ENCODE measurements at regions of chr13 and their contacts with region 1.

Region 1: DNA sequence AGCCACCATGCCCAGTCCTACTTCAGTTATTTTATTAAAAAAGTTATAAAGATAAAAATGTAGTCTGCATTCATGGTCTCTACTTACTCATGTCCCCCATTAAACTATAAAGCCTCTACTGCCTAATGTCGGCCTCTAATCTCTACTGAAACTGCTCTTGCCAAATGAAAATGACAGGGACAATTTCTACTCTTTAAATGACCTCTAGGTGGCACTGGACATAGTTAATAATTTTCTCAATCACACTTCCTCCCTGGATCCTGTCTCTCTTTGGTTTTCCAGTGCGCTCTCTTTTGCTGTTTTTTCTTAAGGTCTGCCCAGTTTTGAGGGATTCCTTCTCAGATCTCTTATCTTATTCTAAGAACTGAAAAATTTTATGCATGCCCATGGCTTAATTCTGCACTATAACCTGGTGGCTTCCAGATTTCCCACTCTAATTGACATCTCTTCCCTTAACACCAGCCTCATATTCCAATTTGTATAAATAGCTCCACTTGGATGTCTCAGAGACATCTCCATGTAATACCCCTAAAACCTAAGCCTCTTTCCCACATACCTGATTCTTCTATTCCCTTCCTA is 54.3 kb downstream of the MTMR6 start:
- DNase-seq: peak in 2 of 9 experiments; percentile 29 to 41
- ATAC-seq: no peak
- H3K4me3 ChIP-seq: no peak overlapping the region
- H3K4me3 Mint-ChIP-seq: no peak overlapping the region
- H3K27ac ChIP-seq: no peak overlapping the region
- H3K27ac Mint-ChIP-seq: no peak overlapping the region
- H3K4me1 ChIP-seq: no peaks in the 10 kb centered on the region
- H3K4me1 Mint-ChIP-seq: peaks cover 3% of the 10 kb centered on the region
- H3K27me3 ChIP-seq: no peaks in the 10 kb centered on the region
- H3K27me3 Mint-ChIP-seq: peaks cover 14% of the 10 kb centered on the region
- CTCF ChIP-seq: peak; percentile 49

Region 2: DNA sequence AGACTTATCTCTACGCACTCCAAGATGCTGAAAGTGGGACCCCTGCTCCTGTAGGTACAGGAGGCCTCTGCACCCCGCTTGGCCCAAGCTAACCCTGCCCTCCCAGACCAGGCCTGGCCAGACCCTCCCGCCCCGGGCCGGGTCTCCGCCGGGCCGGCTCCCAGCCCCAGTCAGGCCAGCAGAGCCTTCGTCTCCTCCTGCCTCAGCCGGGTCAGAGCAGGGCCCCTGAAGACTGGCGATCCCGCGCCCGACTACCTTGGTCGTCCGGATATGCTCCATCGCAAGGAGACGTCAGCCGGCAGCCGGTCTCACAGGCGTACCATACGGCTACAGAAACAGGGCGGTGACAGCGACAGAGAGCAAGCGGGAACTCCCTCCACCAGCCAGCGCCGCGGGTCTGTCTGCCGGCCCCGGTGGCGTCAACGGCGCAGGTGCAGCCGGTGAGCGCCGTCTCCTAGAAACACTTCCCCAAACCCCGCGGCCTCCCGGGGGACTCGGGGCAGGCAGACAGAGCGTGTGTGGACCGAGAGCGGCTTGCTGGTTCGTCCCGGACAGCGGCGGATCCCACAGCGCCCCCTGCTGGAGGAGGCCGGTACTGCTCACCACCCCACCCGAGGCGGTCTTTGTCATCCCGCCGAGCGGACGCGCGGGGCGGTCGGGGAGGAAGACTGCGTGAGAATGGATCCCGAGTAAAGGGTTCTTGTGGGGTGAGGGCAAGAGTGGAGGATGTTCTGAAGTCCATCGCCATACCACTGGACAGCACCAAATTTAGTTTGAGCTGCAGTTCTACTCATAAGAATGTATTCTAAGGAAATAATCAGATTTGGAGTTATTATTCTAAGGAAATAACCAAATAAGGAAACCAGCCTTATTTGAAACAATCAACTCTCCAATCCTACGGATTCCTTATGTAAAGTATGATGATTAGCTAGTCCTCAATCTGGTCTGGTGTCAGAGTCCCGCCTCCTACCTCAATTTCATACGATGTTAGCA is 54.2 kb after region 1 on chr13 and contains the start of gene MTMR6:
- CTCF ChIA-PET with region 1: no interaction called
- POLR2A ChIA-PET with region 1: no interaction called
- intact Hi-C with region 1: loop called in 1 of 2 experiments (anchors 2 kb)
- DNase-seq: peak; percentile 90 to 98 (median 94)
- ATAC-seq: peak; percentile 81
- H3K4me3 ChIP-seq: peak within 1 kb of the TSS; percentile 83 to 95
- H3K4me3 Mint-ChIP-seq: peak within 1 kb of the TSS; percentile 98
- H3K27ac ChIP-seq: peak within 1 kb of the TSS; percentile 94 to 97
- H3K27ac Mint-ChIP-seq: peak within 1 kb of the TSS; percentile 99
- H3K4me1 ChIP-seq: peaks cover 23% of the 10 kb centered on the region
- H3K4me1 Mint-ChIP-seq: peaks cover 41% of the 10 kb centered on the region
- H3K27me3 ChIP-seq: peaks cover 0 to 2% of the 10 kb centered on the region in 2 experiments
- H3K27me3 Mint-ChIP-seq: peaks cover 10% of the 10 kb centered on the region
- CTCF ChIP-seq: peak; percentile 99
- total RNA-seq, gene MTMR6: 41.9 to 44.4 TPM